Motor neuron (in vitro differentiated cells): ENCODE measurements at regions of chr6 and their contacts with region 1.

Region 1: GRCh38 chr6:41318654-41319565 is 16.5 kb upstream of the NCR2 start:
- ATAC-seq: peak; percentile 92 to 99 (median 96)
- H3K4me3 ChIP-seq: no peak overlapping the region
- H3K27ac ChIP-seq: no peak overlapping the region
- H3K4me1 ChIP-seq: no peaks in the 10 kb centered on the region

Region 2: DNA sequence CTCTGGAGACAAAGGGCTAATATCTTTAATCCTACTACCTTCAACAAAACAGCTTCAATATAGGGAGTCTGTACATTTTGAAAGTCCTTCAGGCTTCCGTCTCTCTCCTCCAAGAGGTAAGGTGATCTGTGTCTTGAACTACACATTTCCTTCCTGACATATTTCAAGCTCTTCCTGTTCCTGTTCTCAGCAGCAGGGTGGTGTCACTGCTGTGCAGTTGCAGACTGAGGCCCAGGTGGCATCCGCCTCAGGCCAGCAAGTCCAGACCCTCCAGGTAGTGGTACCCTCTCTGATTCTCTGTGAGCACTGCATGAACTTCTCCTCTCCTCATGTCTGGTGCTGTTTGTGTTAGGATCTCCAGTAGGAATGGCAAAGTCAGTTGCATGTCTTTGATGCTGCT is 238.3 kb before region 1 on chr6:
- in situ Hi-C with region 1: loop called in 2 of 9 experiments (anchors 10 to 25 kb)
- ATAC-seq: no peak
- H3K4me3 ChIP-seq: no peak overlapping the region
- H3K27ac ChIP-seq: no peak overlapping the region
- H3K4me1 ChIP-seq: no peaks in the 10 kb centered on the region

Region 3: DNA sequence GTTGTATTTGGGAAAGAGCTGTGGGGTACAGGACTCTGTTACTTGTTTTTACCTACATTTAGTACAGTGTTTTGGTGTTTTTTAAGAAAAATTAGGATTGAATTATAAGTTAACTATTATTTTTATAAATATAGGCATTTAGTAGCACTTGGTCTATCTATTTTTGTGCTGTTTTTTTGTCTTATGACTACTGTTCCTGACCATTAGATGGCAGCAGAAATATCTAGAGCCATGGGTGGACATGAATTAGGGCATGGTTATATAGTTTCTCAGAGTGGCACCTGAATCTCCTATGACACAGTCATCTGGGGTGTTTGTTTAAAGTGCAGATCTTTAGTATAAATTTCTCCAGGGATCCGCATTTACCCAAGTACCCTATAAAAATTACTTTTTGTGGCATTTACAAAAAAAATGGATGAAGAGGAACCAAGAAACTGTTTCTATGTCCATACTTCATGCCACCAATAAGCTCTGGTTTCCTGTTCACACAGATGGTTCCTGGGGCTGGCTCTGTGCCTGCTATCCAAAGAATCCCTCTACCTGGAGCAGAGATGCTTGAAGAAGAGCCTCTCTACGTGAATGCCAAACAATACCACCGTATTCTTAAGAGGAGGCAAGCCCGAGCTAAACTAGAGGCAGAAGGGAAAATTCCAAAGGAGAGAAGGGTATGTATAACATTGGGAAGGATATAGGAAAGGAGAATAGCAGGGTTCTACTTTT is 226.3 kb before region 1 on chr6:
- in situ Hi-C with region 1: loop called in 2 of 9 experiments (anchors 10 to 25 kb)
- ATAC-seq: peak in 3 of 8 experiments; percentile 25 to 40 (median 38)
- H3K4me3 ChIP-seq: no peak overlapping the region
- H3K27ac ChIP-seq: no peak overlapping the region
- H3K4me1 ChIP-seq: no peaks in the 10 kb centered on the region